Activated CD8-positive, alpha-beta T cell treated with anti-CD3 and anti-CD28 coated beads, Interleukin-2, amount 10 ng/mL, durations not matched to agents 7 days and 5 days (primary cell): ENCODE measurements at regions of chr1 and their contacts with region 1.

Region 1: DNA sequence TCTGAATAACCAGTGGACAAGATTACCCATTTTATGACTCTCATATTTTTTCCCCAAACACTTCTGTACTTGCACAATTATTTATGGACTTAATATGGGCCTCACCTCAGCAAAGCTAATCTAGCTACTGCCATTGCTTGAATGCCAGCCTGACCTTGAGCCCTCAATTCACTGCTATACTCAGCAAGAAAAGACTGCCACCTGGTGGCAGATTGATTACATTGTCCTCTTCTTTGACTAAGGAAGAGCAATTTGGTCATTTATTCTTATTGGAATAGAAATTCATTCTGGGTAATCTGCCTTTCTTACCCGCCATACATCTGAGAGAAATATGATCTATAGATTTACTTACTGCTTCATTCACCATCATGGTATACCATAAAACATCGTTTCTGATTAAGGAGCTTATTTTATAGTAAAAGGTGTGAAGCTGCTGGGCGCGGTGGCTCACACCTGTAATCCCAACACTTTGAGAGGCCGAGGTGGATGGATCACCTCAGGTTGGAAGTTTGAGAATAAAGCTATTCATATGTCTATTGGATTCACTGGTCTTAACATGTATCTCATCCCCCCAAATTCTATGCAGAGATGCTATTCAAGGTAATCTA is 32.9 kb upstream of the DIPK1A start:
- DNase-seq: peak; percentile 89
- ATAC-seq: peak; percentile 83
- H3K4me3 Mint-ChIP-seq: no peak overlapping the region
- H3K27ac Mint-ChIP-seq: peak overlapping the region; percentile 71
- H3K4me1 Mint-ChIP-seq: peaks cover 60% of the 10 kb centered on the region
- H3K27me3 Mint-ChIP-seq: no peaks in the 10 kb centered on the region

Region 2: GRCh38 chr1:92851729-92852128 is 142.5 kb before region 1 on chr1:
- CTCF ChIA-PET with region 1: interaction called, 142 read pairs
- POLR2A ChIA-PET with region 1: no interaction called
- DNase-seq: no peak
- ATAC-seq: no peak
- H3K4me3 Mint-ChIP-seq: no peak overlapping the region
- H3K27ac Mint-ChIP-seq: no peak overlapping the region
- H3K4me1 Mint-ChIP-seq: peaks cover 7% of the 10 kb centered on the region
- H3K27me3 Mint-ChIP-seq: no peaks in the 10 kb centered on the region

Region 3: DNA sequence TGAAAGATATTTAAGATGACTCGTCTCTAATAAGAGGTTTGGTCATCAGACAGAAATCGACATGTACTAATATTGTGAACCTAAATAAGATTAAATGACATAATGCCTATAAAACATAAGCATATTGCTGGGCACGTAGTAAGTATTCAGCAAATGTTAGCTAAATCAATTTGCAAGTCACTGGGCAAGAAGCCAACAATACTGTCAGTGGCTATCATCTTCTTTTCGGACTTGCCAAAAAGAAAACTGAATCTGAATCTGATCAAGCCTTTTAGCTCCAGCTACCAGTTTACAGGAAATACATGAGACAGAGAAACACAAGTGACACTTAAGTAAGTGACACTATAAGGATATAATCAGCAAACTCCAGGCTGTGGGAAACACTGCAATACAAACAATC is 116.4 kb before region 1 on chr1:
- CTCF ChIA-PET with region 1: interaction called, 17 read pairs
- POLR2A ChIA-PET with region 1: no interaction called
- DNase-seq: no peak
- ATAC-seq: peak; percentile 50
- H3K4me3 Mint-ChIP-seq: peak overlapping the region; percentile 13
- H3K27ac Mint-ChIP-seq: peak overlapping the region; percentile 57
- H3K4me1 Mint-ChIP-seq: peaks cover 32% of the 10 kb centered on the region
- H3K27me3 Mint-ChIP-seq: no peaks in the 10 kb centered on the region

Region 4: GRCh38 chr1:92960395-92961130 is 33.6 kb before region 1 on chr1:
- CTCF ChIA-PET with region 1: interaction called, 623 read pairs
- POLR2A ChIA-PET with region 1: interaction called, 64 read pairs
- DNase-seq: peak; percentile 81
- ATAC-seq: peak; percentile 54
- H3K4me3 Mint-ChIP-seq: peak overlapping the region; percentile 92
- H3K27ac Mint-ChIP-seq: peak overlapping the region; percentile 96
- H3K4me1 Mint-ChIP-seq: peaks cover 36% of the 10 kb centered on the region
- H3K27me3 Mint-ChIP-seq: no peaks in the 10 kb centered on the region

Region 5: DNA sequence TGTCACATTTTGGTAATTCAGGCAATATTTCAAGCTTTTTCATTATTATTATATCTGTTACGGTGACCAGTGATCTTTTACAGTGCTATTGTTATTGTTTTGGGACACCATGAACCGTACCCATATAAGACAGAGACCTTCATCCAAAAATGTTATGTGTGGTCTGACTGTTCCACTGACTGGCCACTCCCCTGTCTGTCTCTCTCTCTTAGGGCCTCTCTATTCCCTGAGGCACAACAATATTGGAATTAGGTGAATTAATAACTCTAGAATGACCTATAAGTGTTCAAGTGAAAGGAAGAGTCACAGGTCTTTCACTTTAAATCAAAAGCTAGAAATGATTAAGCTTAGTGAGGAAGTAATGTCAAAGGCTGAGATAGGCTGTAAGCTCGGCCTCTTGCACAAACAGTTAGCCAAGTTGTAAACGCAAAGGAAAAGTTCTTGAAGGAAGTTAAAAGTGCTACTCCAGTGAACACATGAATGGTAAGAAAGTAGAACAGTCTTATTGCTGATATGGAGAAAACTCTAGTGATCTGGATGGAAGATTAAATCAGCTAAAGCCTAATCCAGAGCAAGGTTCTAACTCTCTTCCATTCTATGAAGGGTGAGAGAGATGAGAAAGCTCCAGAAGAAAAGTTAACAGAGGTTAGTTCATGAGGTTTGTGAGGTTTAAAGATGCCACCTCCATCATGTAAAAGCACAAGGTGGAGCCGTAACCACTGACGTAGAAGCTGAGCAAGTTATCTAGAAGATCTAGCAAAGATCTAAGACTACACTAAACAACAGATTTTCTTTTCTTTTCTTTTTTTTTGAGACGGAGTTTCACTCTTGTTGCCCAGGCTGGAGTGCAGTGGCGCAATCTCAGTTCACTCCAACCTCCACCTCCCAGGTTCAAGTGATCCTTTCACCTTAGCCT is 13.2 kb before region 1 on chr1:
- CTCF ChIA-PET with region 1: interaction called, 623 read pairs
- POLR2A ChIA-PET with region 1: interaction called, 15 read pairs
- DNase-seq: peak; percentile 72
- ATAC-seq: peak; percentile 92
- H3K4me3 Mint-ChIP-seq: peak overlapping the region; percentile 40
- H3K27ac Mint-ChIP-seq: peak overlapping the region; percentile 96
- H3K4me1 Mint-ChIP-seq: peaks cover 64% of the 10 kb centered on the region
- H3K27me3 Mint-ChIP-seq: no peaks in the 10 kb centered on the region

Region 6: DNA sequence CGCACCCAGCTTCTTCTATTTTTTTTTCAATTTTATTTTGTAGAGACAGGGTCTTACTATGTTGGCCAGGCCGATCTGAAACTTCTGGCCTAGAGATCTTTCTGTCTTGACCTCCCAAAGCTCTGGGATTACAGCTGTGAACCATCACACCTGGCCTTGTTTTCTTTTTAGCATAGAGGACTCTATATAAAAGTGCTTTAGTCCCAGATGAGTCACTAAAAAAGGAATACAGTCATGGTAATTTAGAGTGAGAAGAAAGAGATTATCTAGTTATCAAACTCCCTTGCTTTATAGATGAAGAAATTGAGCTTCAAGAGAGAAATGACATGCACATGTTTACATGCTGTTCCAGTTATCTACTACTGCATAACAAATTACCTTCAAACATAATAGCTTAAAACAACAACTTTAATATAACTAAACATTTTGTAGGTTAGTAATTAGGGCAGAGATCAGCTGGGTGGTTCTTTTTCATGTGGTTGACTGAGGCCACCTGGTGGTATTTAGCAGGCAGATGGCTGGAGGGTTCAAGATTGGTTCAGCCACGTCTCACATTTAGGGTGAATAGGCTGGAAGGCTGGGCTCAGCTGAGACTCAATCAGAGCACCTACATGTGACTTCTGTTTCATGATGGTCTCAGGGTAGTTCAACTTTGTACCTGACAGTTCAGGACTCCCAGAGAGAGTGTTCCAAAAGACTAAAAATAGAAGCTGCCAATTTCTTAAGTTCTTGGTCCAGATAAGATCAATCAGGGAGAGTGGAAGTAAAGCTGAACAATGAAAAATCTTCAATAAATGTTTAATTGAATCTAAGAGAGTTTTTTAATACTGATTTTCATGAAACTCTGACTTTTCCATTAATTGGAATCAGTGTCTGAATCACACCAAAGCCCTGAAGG is 67.9 kb after region 1 on chr1:
- CTCF ChIA-PET with region 1: interaction called, 13 read pairs
- POLR2A ChIA-PET with region 1: no interaction called
- DNase-seq: peak; percentile 61
- ATAC-seq: peak; percentile 76
- H3K4me3 Mint-ChIP-seq: no peak overlapping the region
- H3K27ac Mint-ChIP-seq: no peak overlapping the region
- H3K4me1 Mint-ChIP-seq: peaks cover 2% of the 10 kb centered on the region
- H3K27me3 Mint-ChIP-seq: peaks cover 27% of the 10 kb centered on the region